Natural killer cell (primary cell): ENCODE measurements at regions of chr19 and their contacts with region 1.

Region 1: DNA sequence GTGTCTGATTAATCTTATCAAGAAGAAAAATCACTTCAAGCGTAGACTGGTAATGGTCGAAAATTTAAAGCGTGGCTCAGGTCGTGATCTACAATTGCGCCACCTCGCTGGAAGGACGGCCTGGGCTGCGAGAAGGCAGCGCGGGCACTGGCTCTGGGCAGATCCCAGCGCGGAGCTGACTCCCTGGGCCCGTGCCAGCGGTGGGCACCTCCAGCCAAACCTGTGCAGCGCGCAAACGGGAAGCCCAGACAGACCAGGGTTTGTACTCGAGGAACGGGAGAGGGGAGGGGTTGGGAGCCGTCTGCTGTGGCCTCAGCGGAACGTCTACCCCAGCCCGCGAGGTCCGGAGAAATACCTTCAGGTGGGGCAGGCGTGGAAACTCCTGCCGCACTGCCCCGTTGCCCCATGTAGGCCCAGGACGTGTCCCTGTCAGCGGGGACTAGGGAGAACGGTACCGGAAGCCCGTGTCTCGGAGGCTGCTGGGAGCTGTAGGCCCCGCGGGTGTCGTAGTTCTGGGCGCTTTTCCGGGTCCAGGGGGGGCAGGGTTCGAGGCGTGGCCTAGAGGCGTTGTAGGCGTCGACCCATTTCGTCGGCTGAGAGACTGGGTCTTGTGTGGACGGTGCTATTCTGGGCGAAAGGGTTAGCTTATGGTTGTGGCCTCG is 21.1 kb downstream of the ZNF274 start:
- DNase-seq: no peak
- ATAC-seq: no peak
- H3K4me3 ChIP-seq: no peak overlapping the region
- H3K4me3 Mint-ChIP-seq: no peak overlapping the region
- H3K27ac ChIP-seq: no peak overlapping the region
- H3K27ac Mint-ChIP-seq: no peak overlapping the region
- H3K4me1 ChIP-seq: no peaks in the 10 kb centered on the region
- H3K4me1 Mint-ChIP-seq: peaks cover 7 to 10% of the 10 kb centered on the region in 2 donors
- H3K27me3 ChIP-seq: no peaks in the 10 kb centered on the region
- H3K27me3 Mint-ChIP-seq: no peaks in the 10 kb centered on the region
- CTCF ChIP-seq: no peak

Region 2: DNA sequence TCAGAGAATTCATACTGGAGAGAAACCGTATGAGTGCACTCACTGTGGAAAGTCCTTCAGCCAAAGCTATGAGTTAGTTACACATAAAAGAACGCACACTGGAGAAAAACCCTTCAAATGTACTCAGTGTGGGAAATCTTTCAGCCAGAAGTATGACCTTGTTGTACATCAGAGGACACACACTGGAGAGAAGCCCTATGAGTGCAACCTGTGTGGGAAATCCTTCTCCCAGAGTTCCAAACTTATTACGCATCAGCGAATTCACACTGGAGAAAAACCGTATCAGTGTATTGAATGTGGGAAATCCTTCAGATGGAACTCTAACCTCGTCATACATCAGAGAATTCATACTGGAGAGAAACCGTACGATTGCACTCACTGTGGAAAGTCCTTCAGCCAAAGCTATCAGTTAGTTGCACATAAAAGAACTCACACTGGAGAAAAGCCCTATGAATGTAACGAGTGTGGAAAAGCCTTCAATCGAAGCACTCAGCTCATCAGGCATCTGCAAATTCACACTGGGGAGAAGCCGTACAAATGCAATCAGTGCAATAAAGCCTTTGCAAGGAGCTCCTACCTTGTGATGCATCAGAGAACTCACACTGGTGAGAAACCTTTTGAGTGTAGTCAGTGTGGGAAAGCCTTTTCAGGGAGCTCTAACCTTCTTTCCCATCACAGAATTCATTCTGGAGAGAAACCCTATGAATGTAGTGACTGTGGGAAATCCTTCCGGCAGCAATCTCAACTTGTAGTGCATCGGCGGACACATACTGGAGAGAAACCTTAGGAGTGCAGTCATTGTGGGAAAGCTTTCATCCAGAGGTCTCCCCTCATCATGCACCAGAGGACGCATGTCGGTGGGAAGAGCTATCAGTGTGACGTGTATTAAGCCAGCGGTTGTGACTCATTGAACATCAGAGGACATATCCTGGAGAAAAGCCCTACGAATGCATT is 58.3 kb after region 1 on chr19:
- intact Hi-C with region 1: loop called (anchors 10 kb)
- DNase-seq: no peak
- ATAC-seq: no peak
- H3K4me3 ChIP-seq: no peak overlapping the region
- H3K4me3 Mint-ChIP-seq: no peak overlapping the region
- H3K27ac ChIP-seq: no peak overlapping the region
- H3K27ac Mint-ChIP-seq: no peak overlapping the region
- H3K4me1 ChIP-seq: no peaks in the 10 kb centered on the region
- H3K4me1 Mint-ChIP-seq: peaks cover 0 to 5% of the 10 kb centered on the region in 2 donors
- H3K27me3 ChIP-seq: no peaks in the 10 kb centered on the region
- H3K27me3 Mint-ChIP-seq: no peaks in the 10 kb centered on the region
- CTCF ChIP-seq: no peak